ENCODE measurements at regions of chr1 and their contacts with region 1.

Region 1: DNA sequence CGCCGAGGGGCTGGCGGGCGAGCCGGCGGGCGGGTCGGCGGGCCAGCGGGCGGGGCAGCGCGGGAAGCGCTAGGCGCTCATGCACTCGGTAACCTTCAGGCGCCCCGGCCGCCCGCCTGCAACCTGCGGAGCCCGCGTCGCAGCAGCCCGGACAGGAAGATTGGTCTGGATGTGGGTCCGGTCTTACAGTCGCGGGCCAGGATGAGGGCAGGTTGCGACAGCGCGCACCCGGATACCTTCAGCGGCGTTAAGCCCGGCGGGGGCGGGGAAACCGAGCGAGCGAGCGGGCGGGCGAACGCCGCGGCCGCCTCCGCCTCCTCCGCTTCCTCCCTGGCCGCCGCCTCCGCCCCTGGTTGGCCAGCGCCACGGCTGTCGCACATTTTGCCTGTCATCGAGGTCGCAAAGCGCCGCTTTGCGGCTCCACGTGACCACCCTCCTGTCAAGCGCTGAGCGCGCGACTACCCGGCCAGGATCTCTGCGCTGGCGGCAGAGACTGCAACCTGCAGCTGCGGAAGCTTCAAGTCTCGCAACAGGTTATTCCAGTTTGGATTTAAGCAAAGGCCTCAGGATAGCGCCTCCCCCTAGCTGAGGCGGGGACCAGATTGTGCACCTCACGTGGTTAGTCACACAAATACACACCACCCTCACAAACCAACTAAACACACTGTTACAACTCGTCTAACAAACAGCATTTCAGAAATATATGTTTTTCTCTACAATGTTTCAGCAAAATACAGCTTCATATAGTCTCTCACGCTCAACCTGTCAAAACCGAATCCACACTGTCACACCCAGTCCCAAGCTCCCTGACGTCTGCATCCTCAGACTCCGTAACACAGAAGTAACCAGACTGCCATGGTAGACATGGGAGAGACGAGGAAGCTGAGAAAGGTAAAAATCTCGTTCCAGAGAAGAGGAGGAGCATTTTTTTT is at the start of gene FAF1:
- DNase-seq: peak; percentile 98 to 99
- ATAC-seq: peak; percentile 89 to 98 (median 93)
- H3K4me3 ChIP-seq: peak within 1 kb of the TSS; percentile 44
- H3K4me3 Mint-ChIP-seq: peak within 1 kb of the TSS; percentile 86
- H3K27ac ChIP-seq: peak within 1 kb of the TSS; percentile 67
- H3K27ac Mint-ChIP-seq: peak within 1 kb of the TSS; percentile 74 to 90
- H3K4me1 ChIP-seq: peaks cover 11% of the 10 kb centered on the region
- H3K4me1 Mint-ChIP-seq: peaks cover 20 to 28% of the 10 kb centered on the region in 2 donors
- H3K27me3 ChIP-seq: no peaks in the 10 kb centered on the region
- H3K27me3 Mint-ChIP-seq: no peaks in the 10 kb centered on the region
- CTCF ChIP-seq: no peak
- total RNA-seq, gene FAF1: 56.8 to 59.7 (median 57.2) TPM

Region 2: DNA sequence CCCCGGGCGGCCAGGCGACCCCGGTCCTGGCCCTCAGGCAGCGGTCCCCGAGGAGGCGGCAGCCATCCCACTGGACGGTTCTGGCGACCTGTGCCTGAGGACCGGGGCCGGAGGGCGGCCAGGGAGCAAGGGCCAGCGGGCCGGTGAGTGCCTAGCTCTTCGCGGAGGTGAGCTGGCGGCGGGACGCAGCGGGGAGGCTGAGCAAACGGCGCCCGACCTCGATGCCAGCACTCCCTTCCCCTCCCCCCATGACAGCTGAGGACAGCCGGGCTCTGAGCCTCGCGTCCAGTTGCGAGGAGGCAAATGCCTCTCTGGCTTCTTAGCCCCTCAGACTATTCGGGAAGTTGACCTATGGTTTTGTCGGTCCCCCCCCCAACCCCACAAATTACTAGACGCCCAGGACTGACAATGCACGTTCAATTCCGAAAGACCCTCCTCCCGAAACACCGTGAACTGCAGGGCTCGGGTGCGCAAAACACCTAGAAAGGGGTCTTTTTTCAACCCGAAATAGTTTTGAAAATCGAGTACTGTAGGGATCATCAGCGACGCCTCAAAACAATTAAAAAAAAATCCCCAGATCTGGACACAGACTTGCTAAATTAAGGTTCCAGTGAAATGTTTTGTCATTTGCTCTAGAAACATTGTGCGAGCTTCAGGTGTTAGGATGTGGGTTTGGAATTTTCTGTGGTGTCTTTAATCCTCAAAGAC is 18.1 kb after region 1 on chr1:
- intact Hi-C with region 1: loop called (anchors 2 kb)
- DNase-seq: peak; percentile 34 to 60
- ATAC-seq: peak; percentile 57 to 68 (median 60)
- H3K4me3 ChIP-seq: peak overlapping the region; percentile 84
- H3K4me3 Mint-ChIP-seq: peak overlapping the region; percentile 86
- H3K27ac ChIP-seq: peak overlapping the region; percentile 34
- H3K27ac Mint-ChIP-seq: peak overlapping the region; percentile 61 to 88
- H3K4me1 ChIP-seq: peaks cover 21% of the 10 kb centered on the region
- H3K4me1 Mint-ChIP-seq: peaks cover 18 to 21% of the 10 kb centered on the region in 2 donors
- H3K27me3 ChIP-seq: peaks cover 2% of the 10 kb centered on the region
- H3K27me3 Mint-ChIP-seq: no peaks in the 10 kb centered on the region
- CTCF ChIP-seq: no peak

Region 3: DNA sequence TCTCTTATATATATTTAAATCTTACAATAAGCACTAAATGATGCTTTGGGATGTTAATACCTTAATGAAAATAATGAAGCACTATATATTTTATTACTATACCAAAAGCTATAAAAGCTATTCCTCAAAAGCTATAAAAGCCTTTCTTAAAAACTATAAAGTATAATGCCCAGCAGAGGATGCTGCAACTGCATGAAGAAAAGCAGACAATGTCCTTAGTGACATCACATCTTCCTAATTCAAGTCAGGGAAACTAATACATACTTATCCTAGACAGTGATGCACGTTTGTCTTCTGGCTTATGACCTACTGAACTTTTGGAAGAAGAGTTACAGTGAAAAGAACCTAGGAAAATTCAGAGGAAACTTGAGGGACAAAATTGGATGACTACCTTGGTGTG is 128.3 kb after region 1 on chr1:
- intact Hi-C with region 1: no loop called
- DNase-seq: no peak
- ATAC-seq: no peak
- H3K4me3 ChIP-seq: no peak overlapping the region
- H3K4me3 Mint-ChIP-seq: no peak overlapping the region
- H3K27ac ChIP-seq: no peak overlapping the region
- H3K27ac Mint-ChIP-seq: no peak overlapping the region
- H3K4me1 ChIP-seq: no peaks in the 10 kb centered on the region
- H3K4me1 Mint-ChIP-seq: no peaks in the 10 kb centered on the region
- H3K27me3 ChIP-seq: peaks cover 16% of the 10 kb centered on the region
- H3K27me3 Mint-ChIP-seq: peaks cover 25 to 48% of the 10 kb centered on the region in 2 donors
- CTCF ChIP-seq: no peak

Region 4: GRCh38 chr1:51235673-51236530 is 275.7 kb after region 1 on chr1 and contains the start of gene RNF11:
- intact Hi-C with region 1: loop called (anchors 5 kb)
- DNase-seq: peak; percentile 93 to 97
- ATAC-seq: peak; percentile 93 to 98 (median 95)
- H3K4me3 ChIP-seq: peak within 1 kb of the TSS; percentile 99
- H3K4me3 Mint-ChIP-seq: peak within 1 kb of the TSS; percentile 90
- H3K27ac ChIP-seq: peak within 1 kb of the TSS; percentile 88
- H3K27ac Mint-ChIP-seq: no peak within 1 kb of the TSS
- H3K4me1 ChIP-seq: peaks cover 24% of the 10 kb centered on the region
- H3K4me1 Mint-ChIP-seq: peaks cover 32 to 39% of the 10 kb centered on the region in 2 donors
- H3K27me3 ChIP-seq: no peaks in the 10 kb centered on the region
- H3K27me3 Mint-ChIP-seq: no peaks in the 10 kb centered on the region
- CTCF ChIP-seq: no peak
- total RNA-seq, gene RNF11: 68.3 to 89.5 (median 68.4) TPM

Region 5: GRCh38 chr1:51519048-51519864 is 559.1 kb after region 1 on chr1 and contains the start of gene EPS15:
- intact Hi-C with region 1: loop called (anchors 10 kb)
- DNase-seq: peak; percentile 80 to 88
- ATAC-seq: peak; percentile 58 to 82 (median 73)
- H3K4me3 ChIP-seq: peak within 1 kb of the TSS; percentile 90
- H3K4me3 Mint-ChIP-seq: peak within 1 kb of the TSS; percentile 97
- H3K27ac ChIP-seq: peak within 1 kb of the TSS; percentile 82
- H3K27ac Mint-ChIP-seq: peak within 1 kb of the TSS; percentile 93
- H3K4me1 ChIP-seq: peaks cover 25% of the 10 kb centered on the region
- H3K4me1 Mint-ChIP-seq: peaks cover 59 to 62% of the 10 kb centered on the region in 2 donors
- H3K27me3 ChIP-seq: no peaks in the 10 kb centered on the region
- H3K27me3 Mint-ChIP-seq: no peaks in the 10 kb centered on the region
- CTCF ChIP-seq: no peak
- total RNA-seq, gene EPS15: 92.7 to 127 (median 93.5) TPM